GM10248 (cell line): ENCODE measurements at regions of chr11 and their contacts with region 1.

Region 1: DNA sequence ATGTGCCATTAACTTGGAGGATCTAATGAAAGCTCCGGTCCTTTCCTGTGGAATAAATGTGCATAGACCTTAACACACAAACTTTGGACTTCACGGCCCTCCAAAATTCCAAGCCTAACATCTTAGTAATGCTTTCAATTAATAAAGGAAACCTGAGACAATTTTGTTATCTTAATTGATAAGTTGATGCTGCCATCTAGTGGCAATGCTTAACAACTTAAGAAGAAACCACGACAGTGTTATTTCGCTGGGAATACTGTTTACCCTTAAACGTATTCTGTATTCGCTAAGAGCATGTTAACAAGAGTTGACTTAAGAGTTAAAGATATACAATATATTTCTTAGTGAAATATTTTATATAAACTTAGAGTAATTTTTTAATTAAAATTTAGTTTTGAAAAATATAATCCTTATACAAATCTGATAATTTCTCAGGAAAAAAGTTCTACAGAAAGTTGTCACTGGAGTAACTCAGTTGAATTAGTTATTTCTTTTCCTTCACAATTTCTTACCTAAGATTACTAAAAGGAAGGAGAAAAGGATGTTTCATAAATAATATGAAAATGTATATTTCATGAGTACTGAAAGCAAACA is 35.0 kb upstream of the OR9G4 start:
- DNase-seq: peak; percentile 19
- CTCF ChIP-seq: peak; percentile 45

Region 2: GRCh38 chr11:56188602-56189001 is 594.9 kb before region 1 on chr11:
- CTCF ChIA-PET with region 1: no interaction called
- POLR2A ChIA-PET with region 1: no interaction called
- DNase-seq: no peak
- CTCF ChIP-seq: no peak

Region 3: DNA sequence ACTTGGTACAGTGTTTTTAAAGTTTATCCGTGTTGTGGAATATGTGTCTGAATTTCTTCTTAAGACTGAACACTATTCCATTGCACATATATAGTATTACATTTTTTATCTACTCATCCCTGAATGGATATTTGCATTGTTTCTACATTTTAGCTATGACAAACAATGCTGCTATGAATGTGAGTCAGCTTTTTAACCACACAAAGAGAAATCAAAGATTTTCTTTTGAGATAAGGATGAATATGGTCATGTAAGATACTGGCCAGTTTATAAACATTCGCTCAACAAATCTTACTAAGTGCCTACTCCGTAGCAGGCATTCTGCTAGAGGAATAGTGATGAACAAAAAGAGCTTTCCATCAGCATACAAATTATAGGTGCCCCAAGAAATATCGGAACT is 18.6 kb before region 1 on chr11:
- CTCF ChIA-PET with region 1: interaction called, 12 read pairs
- POLR2A ChIA-PET with region 1: no interaction called
- DNase-seq: no peak
- CTCF ChIP-seq: no peak

Region 4: DNA sequence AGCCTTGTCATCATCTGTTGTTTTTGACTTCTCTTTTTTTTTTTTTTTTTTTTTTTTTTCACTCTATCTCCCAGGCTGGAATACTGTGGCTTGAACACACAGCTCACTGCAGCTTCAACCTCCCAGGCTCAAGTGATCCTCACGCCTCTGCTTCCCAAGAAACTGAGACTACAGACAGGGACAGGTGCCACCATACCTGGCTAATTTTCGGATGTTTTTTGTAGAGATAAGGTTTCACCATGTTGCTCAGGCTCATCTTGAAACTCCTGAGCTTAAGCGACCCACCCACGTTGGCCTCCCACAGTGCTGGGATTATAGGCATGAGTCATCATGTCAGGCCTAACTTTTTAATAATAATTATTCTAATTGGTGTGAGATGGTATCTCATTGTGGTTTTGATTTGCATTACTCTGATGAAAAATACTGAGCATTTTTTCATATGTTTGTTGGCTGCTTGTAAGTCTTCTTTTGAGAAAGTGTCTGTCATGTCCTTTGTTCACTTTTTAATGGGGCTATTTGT is 16.2 kb after region 1 on chr11:
- CTCF ChIA-PET with region 1: interaction called, 12 read pairs
- POLR2A ChIA-PET with region 1: no interaction called
- DNase-seq: no peak
- CTCF ChIP-seq: no peak